ENCODE measurements at regions of chr6 and their contacts with region 1.

Region 1: DNA sequence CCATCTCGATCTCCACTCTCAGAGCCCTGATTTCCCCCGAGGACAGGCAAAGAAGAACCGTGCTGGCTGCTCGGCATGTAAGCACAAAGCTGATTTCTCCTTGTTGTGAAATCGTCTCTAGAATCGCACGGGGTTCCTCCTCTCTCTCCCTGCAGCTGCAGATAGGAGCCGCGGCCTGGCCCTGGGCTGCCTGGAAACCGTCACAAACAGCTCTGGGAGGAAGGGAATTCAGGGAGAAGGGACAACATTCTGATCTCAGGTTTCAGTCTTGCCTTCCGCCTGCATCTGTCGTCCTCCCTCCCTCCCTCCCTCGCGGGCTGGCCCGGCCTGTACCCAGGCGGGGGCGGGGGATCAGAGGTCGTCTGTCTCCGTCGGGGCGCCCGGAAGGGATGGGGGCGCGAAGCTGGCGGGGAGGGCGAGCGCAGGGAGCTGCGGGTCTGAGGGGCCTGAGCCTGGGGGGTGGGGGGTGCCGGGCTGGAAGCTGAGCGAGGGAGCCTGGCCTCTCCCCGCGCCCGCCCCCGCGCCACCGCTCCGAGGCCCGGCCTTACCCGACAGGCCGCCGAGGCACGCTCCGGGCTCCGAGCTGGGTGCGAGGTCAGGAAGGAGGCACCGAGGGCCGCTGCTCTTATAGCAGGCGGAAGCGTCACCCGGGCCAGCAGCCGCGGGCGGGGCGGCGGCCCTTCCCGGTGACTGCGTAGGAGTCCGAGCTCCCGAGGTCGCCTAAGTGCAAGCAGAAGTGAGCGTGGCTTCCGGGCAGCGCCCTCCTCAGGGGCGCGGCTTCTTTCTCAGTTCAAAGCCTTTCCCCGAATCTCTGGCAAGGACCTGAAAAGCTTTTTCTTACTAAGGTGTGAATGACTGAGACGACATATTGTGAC is at the start of gene SERPINB1:
- DNase-seq: peak; percentile 71
- ATAC-seq: peak; percentile 77
- H3K4me3 Mint-ChIP-seq: peak within 1 kb of the TSS; percentile 86
- H3K27ac Mint-ChIP-seq: peak within 1 kb of the TSS; percentile 85
- H3K4me1 Mint-ChIP-seq: peaks cover 51% of the 10 kb centered on the region
- H3K27me3 Mint-ChIP-seq: no peaks in the 10 kb centered on the region
- CTCF ChIP-seq: no peak
- total RNA-seq, gene SERPINB1: 59.9 and 60.5 TPM in 2 replicates

Region 2: GRCh38 chr6:2765166-2765895 is 76.2 kb before region 1 on chr6 and contains the start of gene WRNIP1:
- CTCF ChIA-PET with region 1: interaction called, 3 read pairs
- POLR2A ChIA-PET with region 1: interaction called, 19 read pairs
- intact Hi-C with region 1: loop called (anchors 1 kb)
- DNase-seq: peak; percentile 92
- ATAC-seq: peak; percentile 89
- H3K4me3 Mint-ChIP-seq: peak within 1 kb of the TSS; percentile 93
- H3K27ac Mint-ChIP-seq: peak within 1 kb of the TSS; percentile 99
- H3K4me1 Mint-ChIP-seq: peaks cover 39% of the 10 kb centered on the region
- H3K27me3 Mint-ChIP-seq: no peaks in the 10 kb centered on the region
- CTCF ChIP-seq: no peak
- total RNA-seq, gene WRNIP1: 31.6 and 31.9 TPM in 2 replicates

Region 3: GRCh38 chr6:2799936-2800527 is 41.5 kb before region 1 on chr6:
- CTCF ChIA-PET with region 1: no interaction called
- POLR2A ChIA-PET with region 1: no interaction called
- intact Hi-C with region 1: no loop called
- DNase-seq: no peak
- ATAC-seq: no peak
- H3K4me3 Mint-ChIP-seq: no peak overlapping the region
- H3K27ac Mint-ChIP-seq: no peak overlapping the region
- H3K4me1 Mint-ChIP-seq: peaks cover 13% of the 10 kb centered on the region
- H3K27me3 Mint-ChIP-seq: no peaks in the 10 kb centered on the region
- CTCF ChIP-seq: no peak

Region 4: DNA sequence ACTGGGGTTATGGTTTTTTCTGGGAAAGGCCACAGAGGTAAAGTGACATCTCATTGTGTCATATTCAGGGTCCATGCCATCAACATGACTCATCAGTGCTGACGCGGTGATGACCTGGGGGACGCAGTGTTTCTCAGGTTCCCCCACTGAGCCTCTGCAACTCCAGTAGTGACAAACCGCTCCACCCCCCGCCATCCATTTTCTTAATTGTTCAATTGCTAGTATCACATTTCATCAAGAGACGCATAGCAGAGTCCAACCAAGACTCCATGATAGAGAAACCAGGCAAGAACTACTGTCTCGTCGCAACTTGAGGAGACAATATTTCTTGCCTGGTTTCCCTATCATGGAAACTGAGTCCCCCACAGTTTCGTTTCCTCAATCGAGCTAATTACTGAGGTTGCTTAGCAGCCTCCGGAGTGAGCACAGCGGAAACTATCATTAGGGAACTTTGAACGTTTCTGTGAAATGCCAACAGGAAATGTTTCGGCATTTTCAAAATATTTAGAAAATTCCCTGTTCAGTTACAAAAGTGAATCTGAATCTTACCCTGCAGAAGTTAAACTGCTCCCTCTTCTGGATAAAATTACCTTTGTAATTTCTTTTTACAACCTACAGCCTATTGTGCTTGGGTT is 12.4 kb after region 1 on chr6:
- CTCF ChIA-PET with region 1: interaction called, 28 read pairs
- POLR2A ChIA-PET with region 1: interaction called, 126 read pairs
- intact Hi-C with region 1: loop called (anchors 1 kb)
- DNase-seq: no peak
- ATAC-seq: peak; percentile 42
- H3K4me3 Mint-ChIP-seq: peak overlapping the region; percentile 74
- H3K27ac Mint-ChIP-seq: peak overlapping the region; percentile 97
- H3K4me1 Mint-ChIP-seq: peaks cover 81% of the 10 kb centered on the region
- H3K27me3 Mint-ChIP-seq: no peaks in the 10 kb centered on the region
- CTCF ChIP-seq: no peak

Region 5: GRCh38 chr6:2900821-2901644 is 59.5 kb after region 1 on chr6:
- CTCF ChIA-PET with region 1: interaction called, 30 read pairs
- POLR2A ChIA-PET with region 1: interaction called, 83 read pairs
- intact Hi-C with region 1: loop called (anchors 2 kb)
- DNase-seq: no peak
- ATAC-seq: no peak
- H3K4me3 Mint-ChIP-seq: peak overlapping the region; percentile 98
- H3K27ac Mint-ChIP-seq: peak overlapping the region; percentile 93
- H3K4me1 Mint-ChIP-seq: peaks cover 61% of the 10 kb centered on the region
- H3K27me3 Mint-ChIP-seq: no peaks in the 10 kb centered on the region
- CTCF ChIP-seq: no peak

Region 6: DNA sequence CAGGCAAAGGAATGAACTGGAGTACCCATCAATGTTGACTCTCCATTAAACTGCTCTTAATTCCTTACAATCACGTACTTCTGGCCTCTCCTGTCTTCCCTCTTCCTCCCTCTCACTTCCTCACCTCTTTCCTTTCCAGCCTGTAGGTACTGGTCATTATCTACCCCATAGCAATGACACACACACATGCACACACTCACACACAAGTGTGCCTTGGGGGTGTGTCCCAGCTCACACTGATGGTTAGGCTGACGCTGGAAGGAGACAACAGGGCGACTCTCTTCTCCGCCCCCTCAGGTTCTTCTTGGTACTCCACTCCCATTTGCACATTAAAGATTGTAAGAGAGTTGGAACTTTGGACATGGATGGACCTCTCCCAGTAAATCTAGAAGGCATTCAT is 75.6 kb after region 1 on chr6:
- CTCF ChIA-PET with region 1: interaction called, 100 read pairs
- POLR2A ChIA-PET with region 1: interaction called, 10 read pairs
- intact Hi-C with region 1: no loop called
- DNase-seq: no peak
- ATAC-seq: peak; percentile 68
- H3K4me3 Mint-ChIP-seq: no peak overlapping the region
- H3K27ac Mint-ChIP-seq: no peak overlapping the region
- H3K4me1 Mint-ChIP-seq: no peaks in the 10 kb centered on the region
- H3K27me3 Mint-ChIP-seq: no peaks in the 10 kb centered on the region
- CTCF ChIP-seq: no peak

Region 7: GRCh38 chr6:2940010-2940850 is 98.7 kb after region 1 on chr6:
- CTCF ChIA-PET with region 1: interaction called, 177 read pairs
- POLR2A ChIA-PET with region 1: interaction called, 18 read pairs
- intact Hi-C with region 1: no loop called
- DNase-seq: peak; percentile 39
- ATAC-seq: peak; percentile 81
- H3K4me3 Mint-ChIP-seq: peak overlapping the region; percentile 82
- H3K27ac Mint-ChIP-seq: peak overlapping the region; percentile 94
- H3K4me1 Mint-ChIP-seq: peaks cover 69% of the 10 kb centered on the region
- H3K27me3 Mint-ChIP-seq: no peaks in the 10 kb centered on the region
- CTCF ChIP-seq: no peak

Measured in activated B cell treated with CpG ODN at 0.5 μM for 24 hours (primary cell).